Lower leg skin (tissue), 4 donors: ENCODE measurements at regions of chr14 and their contacts with region 1.

Region 1: DNA sequence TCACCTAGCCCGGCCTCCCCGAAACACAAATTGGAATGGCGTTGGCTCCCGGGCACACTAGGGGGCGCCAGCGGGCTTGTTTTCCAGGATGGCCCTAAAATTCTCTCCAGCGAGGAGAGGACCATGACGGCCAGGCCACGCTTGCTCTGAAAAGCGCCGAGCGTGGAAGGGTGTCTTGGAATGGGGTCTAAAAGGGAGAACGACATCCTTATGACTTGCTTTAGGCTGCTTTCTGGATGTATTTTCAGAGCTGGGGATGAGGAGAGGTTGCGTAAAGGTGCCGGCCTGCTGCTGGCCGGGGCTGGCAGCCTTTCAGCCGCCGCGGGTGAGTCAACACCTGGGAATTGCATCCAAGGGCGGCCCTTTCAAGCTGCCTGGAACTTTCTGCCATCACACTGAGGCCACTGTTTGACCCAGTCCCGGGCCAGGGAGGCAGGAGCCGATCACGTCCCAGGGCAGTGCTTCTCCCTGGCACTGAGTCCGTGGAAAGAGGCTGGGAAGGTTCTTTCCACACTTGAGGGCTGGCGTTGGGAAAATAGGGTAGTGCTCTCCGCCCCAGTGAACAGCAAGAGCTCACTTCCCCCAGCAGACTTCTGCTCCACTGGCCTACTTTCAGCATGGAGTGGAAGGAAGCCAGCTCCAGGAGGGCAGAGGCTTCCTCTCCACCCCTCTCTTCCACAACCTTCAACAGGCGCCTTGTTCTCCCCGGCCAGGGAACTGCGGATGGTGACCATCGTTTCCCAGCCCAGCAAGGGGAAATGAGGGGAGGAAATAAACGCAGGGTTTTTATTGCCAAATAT is 216.2 kb downstream of the TTC8 start:
- DNase-seq: peak; percentile 83 to 98
- H3K4me3 ChIP-seq: no peak overlapping the region
- CTCF ChIP-seq: peak in 1 of 3 donors; percentile 93
- POLR2A ChIP-seq: no peak

Region 2: GRCh38 chr14:89767861-89768268 is 727.2 kb after region 1 on chr14:
- intact Hi-C with region 1: loop called (anchors 5 kb)
- DNase-seq: peak in 1 of 2 donors; percentile 21
- H3K4me3 ChIP-seq: no peak overlapping the region
- CTCF ChIP-seq: no peak
- POLR2A ChIP-seq: no peak